ENCODE measurements at regions of chr6 and their contacts with region 1.

Region 1: GRCh38 chr6:134063966-134064445 is 11.6 kb upstream of the SLC2A12 start:
- DNase-seq: peak; percentile 69 to 72
- ATAC-seq: peak; percentile 95 to 97
- H3K4me3 ChIP-seq: no peak overlapping the region
- H3K27ac ChIP-seq: 0 out of 6 replicates have a peak overlapping the region, but pooled peaks of 1 of the 2 experiments have one; percentile 9
- H3K4me1 ChIP-seq: peaks cover 20% of the 10 kb centered on the region
- CTCF ChIP-seq: peak; percentile 69
- EP300 ChIP-seq: no peak
- POLR2A ChIP-seq: no peak
- RAD21 ChIP-seq: peak; percentile 78 to 82

Region 2: GRCh38 chr6:133973109-133973971 is 90.7 kb before region 1 on chr6:
- CTCF ChIA-PET with region 1: interaction called, 128 read pairs
- POLR2A ChIA-PET with region 1: no interaction called
- DNase-seq: peak; percentile 39 to 53
- ATAC-seq: peak in 1 of 2 experiments; percentile 34; a peak in 1 of 6 replicates
- H3K4me3 ChIP-seq: no peak overlapping the region
- H3K27ac ChIP-seq: no peak overlapping the region
- H3K4me1 ChIP-seq: peaks cover 19% of the 10 kb centered on the region
- CTCF ChIP-seq: peak; percentile 66
- EP300 ChIP-seq: no peak
- POLR2A ChIP-seq: no peak
- RAD21 ChIP-seq: peak; percentile 66 to 74

Region 3: DNA sequence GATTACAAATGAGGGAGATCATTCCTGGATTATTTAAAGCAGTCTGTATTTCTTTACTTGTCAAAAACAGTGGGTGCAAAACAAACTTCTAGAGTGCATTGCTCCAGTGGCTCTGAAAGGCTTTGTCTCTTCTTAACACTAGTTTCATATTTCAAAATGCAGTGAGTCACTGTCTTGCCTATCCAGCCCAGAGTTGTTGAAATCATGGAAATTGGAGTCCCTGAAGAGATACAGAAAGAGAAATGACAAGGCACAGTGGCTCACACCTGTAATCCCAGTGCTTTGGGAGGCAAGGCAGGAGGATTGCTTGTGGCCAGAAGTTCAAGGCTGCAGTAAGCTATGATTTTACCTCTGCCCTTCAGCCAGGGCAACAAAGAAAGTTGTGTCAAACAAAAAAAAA is 22.9 kb before region 1 on chr6:
- CTCF ChIA-PET with region 1: interaction called, 24 read pairs
- POLR2A ChIA-PET with region 1: no interaction called
- DNase-seq: peak; percentile 16 to 18
- ATAC-seq: peak; percentile 45 to 56; a peak in 2 of 6 replicates
- H3K4me3 ChIP-seq: no peak overlapping the region
- H3K27ac ChIP-seq: peak overlapping the region in 1 of 2 experiments; percentile 28; a peak in 1 of 6 replicates
- H3K4me1 ChIP-seq: peaks cover 14% of the 10 kb centered on the region
- CTCF ChIP-seq: no peak
- EP300 ChIP-seq: no peak
- POLR2A ChIP-seq: no peak
- RAD21 ChIP-seq: no peak

Region 4: DNA sequence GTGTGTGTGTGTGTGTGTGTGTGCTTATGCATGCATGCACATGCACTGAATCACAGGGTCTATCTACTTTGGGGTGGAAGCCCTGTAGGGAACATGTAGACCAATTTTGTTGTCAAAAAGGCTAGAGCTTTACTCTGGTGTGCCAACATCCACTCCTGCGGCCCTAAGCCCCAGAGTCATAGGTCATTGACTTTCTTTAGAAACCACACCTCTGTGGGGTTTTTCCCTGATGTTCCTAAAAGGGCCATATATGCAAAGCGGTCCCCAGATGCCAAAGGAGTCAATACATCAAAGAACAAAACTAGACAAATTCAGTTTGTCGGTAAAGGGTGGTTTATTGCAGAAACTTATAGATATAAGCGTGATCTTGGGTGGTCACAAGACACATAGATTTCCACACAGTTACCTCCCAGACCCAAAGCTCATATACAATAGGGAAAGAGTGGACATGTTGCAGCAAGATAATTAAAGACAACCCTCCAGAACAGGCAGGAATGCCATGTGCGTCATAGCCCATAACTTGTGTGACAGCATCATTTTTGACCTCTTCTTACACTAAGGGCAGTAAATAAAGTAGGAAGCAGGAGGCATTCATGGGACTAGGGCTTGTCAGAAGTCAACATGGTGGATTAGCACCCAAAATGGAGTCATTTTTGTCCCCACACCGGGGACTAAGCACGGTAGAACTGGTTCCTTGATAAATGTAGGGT is 18.3 kb after region 1 on chr6:
- CTCF ChIA-PET with region 1: interaction called, 31 read pairs
- POLR2A ChIA-PET with region 1: no interaction called
- DNase-seq: no peak
- ATAC-seq: no peak
- H3K4me3 ChIP-seq: no peak overlapping the region
- H3K27ac ChIP-seq: no peak overlapping the region
- H3K4me1 ChIP-seq: no peaks in the 10 kb centered on the region
- CTCF ChIP-seq: no peak
- EP300 ChIP-seq: no peak
- POLR2A ChIP-seq: no peak
- RAD21 ChIP-seq: no peak

Region 5: GRCh38 chr6:134317471-134318131 is 253.6 kb after region 1 on chr6 and contains the start of gene SGK1:
- CTCF ChIA-PET with region 1: no interaction called
- POLR2A ChIA-PET with region 1: no interaction called
- DNase-seq: peak in 1 of 2 experiments; percentile 18
- ATAC-seq: peak; percentile 84 to 86
- H3K4me3 ChIP-seq: peak within 1 kb of the TSS; percentile 44
- H3K27ac ChIP-seq: peak within 1 kb of the TSS; percentile 33 to 46; a peak in 4 of 6 replicates
- H3K4me1 ChIP-seq: peaks cover 9% of the 10 kb centered on the region; the same call in 2 of the 3 replicates
- CTCF ChIP-seq: no peak
- EP300 ChIP-seq: no peak
- POLR2A ChIP-seq: no peak
- RAD21 ChIP-seq: no peak
- polyA plus RNA-seq, gene SGK1: 131 and 133 TPM in 2 replicates

Measured in A549 (cell line).